HepG2 (cell line): ENCODE measurements at regions of chr15 and their contacts with region 1.

Region 1: DNA sequence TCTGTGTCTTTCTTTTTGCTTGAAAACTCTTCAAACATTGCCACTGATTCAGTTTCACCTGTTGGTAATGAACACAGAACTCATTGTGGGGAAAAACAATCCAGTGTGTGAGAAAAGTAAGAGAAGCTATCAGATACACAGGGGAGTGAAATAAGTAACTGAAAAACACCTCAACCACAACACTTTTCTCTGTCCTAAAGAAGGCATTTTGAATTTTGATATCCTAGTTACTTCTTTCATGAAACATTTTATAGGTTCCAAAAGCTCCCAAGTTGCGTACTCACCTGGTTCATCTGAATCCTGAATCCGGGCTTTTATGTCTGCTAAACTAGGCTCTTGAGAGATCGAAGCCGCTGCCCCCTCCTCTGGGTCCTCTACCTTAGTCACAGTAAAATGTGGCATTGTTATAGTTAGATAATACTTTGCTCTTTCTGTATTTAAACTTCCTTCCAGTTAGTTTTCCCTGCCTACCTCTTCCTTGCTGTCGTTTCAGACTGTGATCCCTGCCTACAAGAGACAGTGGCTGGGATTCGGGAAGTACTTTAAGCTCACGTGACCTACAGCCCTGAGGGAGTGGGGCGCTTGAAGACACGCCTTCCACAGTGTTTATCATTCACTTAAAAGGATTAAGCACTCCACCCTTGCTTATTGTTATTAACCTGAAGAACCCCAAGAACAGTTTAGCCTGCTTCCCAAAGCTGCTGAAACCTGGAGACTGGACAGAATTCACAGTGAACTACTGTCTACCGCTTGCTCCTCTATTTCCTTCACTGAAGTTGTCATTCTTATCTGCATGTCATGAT is 19.1 kb downstream of the SLC12A6 start:
- DNase-seq: peak; percentile 78
- ATAC-seq: peak; percentile 96
- H3K4me3 ChIP-seq: peak overlapping the region; percentile 68 to 76 (median 71)
- H3K27ac ChIP-seq: peak overlapping the region; percentile 79
- H3K4me1 ChIP-seq: peaks cover 14% of the 10 kb centered on the region
- H3K27me3 ChIP-seq: no peaks in the 10 kb centered on the region
- CTCF ChIP-seq: no peak
- EP300 ChIP-seq: no peak
- POLR2A ChIP-seq: peak; percentile 62 to 72; a peak in 3 of 4 replicates
- RAD21 ChIP-seq: no peak

Region 2: GRCh38 chr15:34304613-34305012 is 13.9 kb before region 1 on chr15:
- CTCF ChIA-PET with region 1: no interaction called
- POLR2A ChIA-PET with region 1: interaction called, 16 read pairs
- in situ Hi-C with region 1: no loop called
- intact Hi-C with region 1: no loop called
- DNase-seq: peak; percentile 15
- ATAC-seq: no peak
- H3K4me3 ChIP-seq: no peak overlapping the region
- H3K27ac ChIP-seq: no peak overlapping the region
- H3K4me1 ChIP-seq: peaks cover 29% of the 10 kb centered on the region
- H3K27me3 ChIP-seq: no peaks in the 10 kb centered on the region
- CTCF ChIP-seq: no peak
- EP300 ChIP-seq: peak in 1 of 2 experiments; percentile 36; a peak in 1 of 4 replicates
- POLR2A ChIP-seq: no peak
- RAD21 ChIP-seq: no peak

Region 3: DNA sequence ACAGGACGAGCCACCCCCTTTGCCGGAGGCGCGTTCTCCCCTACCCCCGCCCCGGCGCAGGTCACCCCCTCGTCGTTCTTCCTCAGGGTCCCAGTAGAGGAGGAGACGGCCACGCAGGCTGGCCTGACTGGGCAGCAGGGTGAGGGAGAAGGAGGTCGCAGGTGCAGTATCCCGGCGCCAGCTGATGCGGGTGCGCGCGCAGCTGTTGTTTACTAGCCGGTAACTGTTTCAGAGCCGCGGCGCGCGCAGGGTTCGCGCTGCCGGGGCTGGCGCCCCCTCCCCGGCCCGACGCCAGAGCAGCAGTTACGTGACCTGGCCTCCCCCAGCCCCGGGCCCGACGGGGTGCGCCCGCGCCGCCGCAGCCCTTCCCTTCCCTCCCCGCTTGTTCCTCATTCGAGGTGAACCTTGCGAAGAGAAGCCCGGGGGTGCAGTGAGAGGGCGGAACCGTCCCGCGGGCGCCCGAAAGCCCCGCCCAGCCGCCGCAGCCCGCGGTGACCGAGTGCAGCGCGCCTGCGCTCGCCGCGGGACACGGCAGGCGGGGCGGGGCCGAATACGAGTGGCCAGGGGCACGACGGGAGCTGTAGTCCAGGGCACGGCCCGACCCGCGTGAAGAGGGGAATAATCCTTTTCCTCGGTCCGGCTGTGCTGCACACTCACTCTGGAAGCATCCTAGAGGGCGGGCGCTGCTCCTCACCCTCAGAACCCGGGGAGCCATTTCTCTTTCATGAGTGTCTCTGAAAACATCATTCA is 19.3 kb after region 1 on chr15 and contains the start of gene SLC12A6:
- CTCF ChIA-PET with region 1: no interaction called
- POLR2A ChIA-PET with region 1: interaction called, 16 read pairs
- in situ Hi-C with region 1: no loop called
- intact Hi-C with region 1: loop called (anchors 2 kb)
- DNase-seq: peak; percentile 78
- ATAC-seq: peak; percentile 95
- H3K4me3 ChIP-seq: peak within 1 kb of the TSS; percentile 83 to 97 (median 83)
- H3K27ac ChIP-seq: peak within 1 kb of the TSS; percentile 78
- H3K4me1 ChIP-seq: peaks cover 48% of the 10 kb centered on the region
- H3K27me3 ChIP-seq: no peaks in the 10 kb centered on the region; a peak in 1 of 5 replicates
- CTCF ChIP-seq: peak; percentile 27; the same call in 1 of the 2 replicates
- EP300 ChIP-seq: no peak
- POLR2A ChIP-seq: peak; percentile 58 to 64; a peak in 3 of 4 replicates
- RAD21 ChIP-seq: peak; percentile 48
- total RNA-seq, gene SLC12A6: 10.1 and 15.2 TPM in 2 replicates

Region 4: GRCh38 chr15:34373951-34374350 is 55.5 kb after region 1 on chr15:
- CTCF ChIA-PET with region 1: no interaction called
- POLR2A ChIA-PET with region 1: no interaction called
- in situ Hi-C with region 1: no loop called
- intact Hi-C with region 1: no loop called
- DNase-seq: no peak
- ATAC-seq: no peak
- H3K4me3 ChIP-seq: no peak overlapping the region
- H3K27ac ChIP-seq: no peak overlapping the region
- H3K4me1 ChIP-seq: no peaks in the 10 kb centered on the region
- H3K27me3 ChIP-seq: no peaks in the 10 kb centered on the region; a peak in 1 of 5 replicates
- CTCF ChIP-seq: no peak
- EP300 ChIP-seq: no peak
- POLR2A ChIP-seq: no peak
- RAD21 ChIP-seq: no peak